Activated CD8-positive, alpha-beta T cell treated with anti-CD3 and anti-CD28 coated beads for 36 hours (primary cell): ENCODE measurements at regions of chr22 and their contacts with region 1.

Region 1: GRCh38 chr22:30444632-30445437 is 19.3 kb downstream of the MTFP1 start:
- DNase-seq: peak; percentile 80
- ATAC-seq: peak; percentile 85
- H3K4me3 Mint-ChIP-seq: no peak overlapping the region
- H3K27ac Mint-ChIP-seq: peak overlapping the region; percentile 27
- H3K4me1 Mint-ChIP-seq: peaks cover 21% of the 10 kb centered on the region
- H3K27me3 Mint-ChIP-seq: peaks cover 37% of the 10 kb centered on the region
- CTCF ChIP-seq: peak; percentile 80

Region 2: GRCh38 chr22:30460147-30460546 is 15.3 kb after region 1 on chr22:
- CTCF ChIA-PET with region 1: no interaction called
- POLR2A ChIA-PET with region 1: no interaction called
- intact Hi-C with region 1: no loop called
- DNase-seq: no peak
- ATAC-seq: no peak
- H3K4me3 Mint-ChIP-seq: no peak overlapping the region
- H3K27ac Mint-ChIP-seq: no peak overlapping the region
- H3K4me1 Mint-ChIP-seq: no peaks in the 10 kb centered on the region
- H3K27me3 Mint-ChIP-seq: peaks cover 1% of the 10 kb centered on the region
- CTCF ChIP-seq: no peak

Region 3: GRCh38 chr22:30474683-30475424 is 30.0 kb after region 1 on chr22:
- CTCF ChIA-PET with region 1: interaction called, 8 read pairs
- POLR2A ChIA-PET with region 1: no interaction called
- intact Hi-C with region 1: loop called (anchors 5 kb)
- DNase-seq: peak; percentile 37
- ATAC-seq: no peak
- H3K4me3 Mint-ChIP-seq: no peak overlapping the region
- H3K27ac Mint-ChIP-seq: no peak overlapping the region
- H3K4me1 Mint-ChIP-seq: no peaks in the 10 kb centered on the region
- H3K27me3 Mint-ChIP-seq: peaks cover 6% of the 10 kb centered on the region
- CTCF ChIP-seq: no peak

Region 4: DNA sequence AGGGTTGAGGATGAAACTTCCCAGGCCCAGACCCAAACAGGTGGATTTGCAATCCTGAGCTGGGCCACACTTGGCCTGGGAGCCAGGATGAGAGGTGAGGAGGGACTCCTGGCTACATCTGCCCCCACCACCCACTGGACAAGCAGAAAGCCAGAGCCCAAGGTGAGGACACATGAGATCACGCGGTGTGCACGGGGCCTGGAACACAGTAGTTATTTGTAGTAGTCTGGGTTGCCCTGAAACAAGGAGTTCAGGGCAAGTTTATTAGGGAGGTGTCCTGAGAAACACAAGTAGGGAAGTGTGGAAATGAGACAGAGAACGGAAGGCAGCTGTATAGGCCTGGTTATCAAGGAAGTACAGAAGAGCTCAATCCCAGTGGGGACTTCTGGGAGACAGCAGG is 102.4 kb after region 1 on chr22:
- CTCF ChIA-PET with region 1: no interaction called
- POLR2A ChIA-PET with region 1: no interaction called
- intact Hi-C with region 1: no loop called
- DNase-seq: no peak
- ATAC-seq: no peak
- H3K4me3 Mint-ChIP-seq: no peak overlapping the region
- H3K27ac Mint-ChIP-seq: no peak overlapping the region
- H3K4me1 Mint-ChIP-seq: peaks cover 3% of the 10 kb centered on the region
- H3K27me3 Mint-ChIP-seq: peaks cover 20% of the 10 kb centered on the region
- CTCF ChIP-seq: no peak